CD4-positive, alpha-beta T cell (primary cell): ENCODE measurements at regions of chr11 and their contacts with region 1.

Region 1: DNA sequence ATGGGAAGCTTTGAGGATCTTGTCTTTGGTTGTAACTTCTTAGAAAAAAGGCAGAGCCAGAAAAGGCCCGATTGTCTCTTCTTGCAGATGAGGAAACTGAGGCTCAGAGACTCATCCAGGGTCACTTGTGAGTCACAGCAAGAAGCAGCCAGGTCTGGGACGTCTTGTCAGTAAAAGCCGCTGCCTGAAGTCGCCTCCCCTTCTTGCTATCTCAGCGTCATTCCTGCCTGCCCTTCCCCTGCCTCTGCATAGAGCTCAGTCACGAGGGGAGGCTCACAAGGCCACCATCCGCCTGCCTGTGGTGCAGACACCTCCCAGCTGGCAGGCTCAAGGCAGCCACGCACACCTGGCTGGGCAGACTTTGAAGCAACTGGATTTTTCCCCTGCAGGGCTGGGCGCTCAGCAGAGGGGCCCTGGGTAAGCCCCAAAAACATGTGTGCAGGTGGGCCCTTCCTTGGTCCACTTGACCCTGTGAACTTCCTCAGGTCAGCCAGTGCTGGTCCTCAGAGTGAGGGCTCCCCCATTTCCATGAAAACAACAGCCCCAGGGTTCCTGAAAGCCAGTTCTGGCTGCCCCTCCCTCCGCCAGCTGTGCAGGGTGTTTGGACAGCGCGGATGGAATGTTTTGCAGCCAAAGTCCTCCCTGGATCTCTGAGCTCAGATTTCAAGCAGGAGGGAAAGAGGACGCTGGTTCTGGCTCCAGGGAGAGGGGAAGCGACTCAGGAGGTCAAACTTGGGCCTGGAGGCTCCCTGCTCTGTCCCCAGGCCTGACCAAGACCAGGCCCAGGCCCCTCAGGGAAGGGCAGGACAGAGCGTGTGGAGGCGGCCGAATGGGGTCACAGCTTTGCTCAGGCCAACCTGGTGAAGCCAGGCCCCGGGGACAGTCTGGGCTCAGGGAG is 6.0 kb upstream of the RAB3IL1 start:
- DNase-seq: no peak
- ATAC-seq: no peak
- H3K4me3 ChIP-seq: no peak overlapping the region
- H3K4me3 Mint-ChIP-seq: no peak overlapping the region
- H3K27ac ChIP-seq: no peak overlapping the region
- H3K27ac Mint-ChIP-seq: no peak overlapping the region
- H3K4me1 ChIP-seq: no peaks in the 10 kb centered on the region
- H3K4me1 Mint-ChIP-seq: peaks cover 2% of the 10 kb centered on the region
- H3K27me3 ChIP-seq: peaks cover 13 to 21% of the 10 kb centered on the region in 2 experiments
- H3K27me3 Mint-ChIP-seq: peaks cover 39% of the 10 kb centered on the region
- CTCF ChIP-seq: no peak

Region 2: GRCh38 chr11:61446211-61446651 is 477.2 kb before region 1 on chr11:
- CTCF ChIA-PET with region 1: no interaction called
- POLR2A ChIA-PET with region 1: no interaction called
- intact Hi-C with region 1: no loop called
- DNase-seq: peak; percentile 45 to 82 (median 64)
- ATAC-seq: peak; percentile 98
- H3K4me3 ChIP-seq: no peak overlapping the region
- H3K4me3 Mint-ChIP-seq: no peak overlapping the region
- H3K27ac ChIP-seq: no peak overlapping the region
- H3K27ac Mint-ChIP-seq: peak overlapping the region; percentile 54
- H3K4me1 ChIP-seq: peaks cover 6% of the 10 kb centered on the region
- H3K4me1 Mint-ChIP-seq: peaks cover 26% of the 10 kb centered on the region
- H3K27me3 ChIP-seq: no peaks in the 10 kb centered on the region
- H3K27me3 Mint-ChIP-seq: no peaks in the 10 kb centered on the region
- CTCF ChIP-seq: peak; percentile 68

Region 3: GRCh38 chr11:61860054-61860903 is 63.1 kb before region 1 on chr11:
- CTCF ChIA-PET with region 1: no interaction called
- POLR2A ChIA-PET with region 1: no interaction called
- intact Hi-C with region 1: loop called in 1 of 2 experiments (anchors 5 kb)
- DNase-seq: no peak
- ATAC-seq: no peak
- H3K4me3 ChIP-seq: no peak overlapping the region
- H3K4me3 Mint-ChIP-seq: no peak overlapping the region
- H3K27ac ChIP-seq: no peak overlapping the region
- H3K27ac Mint-ChIP-seq: no peak overlapping the region
- H3K4me1 ChIP-seq: no peaks in the 10 kb centered on the region
- H3K4me1 Mint-ChIP-seq: no peaks in the 10 kb centered on the region
- H3K27me3 ChIP-seq: no peaks in the 10 kb centered on the region
- H3K27me3 Mint-ChIP-seq: no peaks in the 10 kb centered on the region
- CTCF ChIP-seq: no peak

Region 4: GRCh38 chr11:61871158-61871597 is 52.2 kb before region 1 on chr11:
- CTCF ChIA-PET with region 1: no interaction called
- POLR2A ChIA-PET with region 1: no interaction called
- intact Hi-C with region 1: no loop called
- DNase-seq: peak; percentile 38 to 79 (median 50)
- ATAC-seq: peak; percentile 97
- H3K4me3 ChIP-seq: no peak overlapping the region
- H3K4me3 Mint-ChIP-seq: peak overlapping the region; percentile 13
- H3K27ac ChIP-seq: no peak overlapping the region
- H3K27ac Mint-ChIP-seq: no peak overlapping the region
- H3K4me1 ChIP-seq: peaks cover 7% of the 10 kb centered on the region
- H3K4me1 Mint-ChIP-seq: peaks cover 5% of the 10 kb centered on the region
- H3K27me3 ChIP-seq: no peaks in the 10 kb centered on the region
- H3K27me3 Mint-ChIP-seq: peaks cover 7% of the 10 kb centered on the region
- CTCF ChIP-seq: peak; percentile 57